ENCODE measurements at regions of chr21 and their contacts with region 1.

Region 1: GRCh38 chr21:45478115-45478801 is 64.0 kb downstream of the SLC19A1 start:
- DNase-seq: peak; percentile 85
- ATAC-seq: peak; percentile 83
- H3K4me3 ChIP-seq: peak overlapping the region; percentile 11 to 53 (median 45)
- H3K4me3 Mint-ChIP-seq: peak overlapping the region; percentile 78
- H3K27ac ChIP-seq: peak overlapping the region; percentile 54 to 76
- H3K27ac Mint-ChIP-seq: peak overlapping the region; percentile 78
- H3K4me1 ChIP-seq: peaks cover 28 to 43% of the 10 kb centered on the region in 2 donors
- H3K4me1 Mint-ChIP-seq: peaks cover 29% of the 10 kb centered on the region
- H3K27me3 ChIP-seq: no peaks in the 10 kb centered on the region
- H3K27me3 Mint-ChIP-seq: no peaks in the 10 kb centered on the region
- CTCF ChIP-seq: peak; percentile 91

Region 2: GRCh38 chr21:45130324-45130774 is 347.9 kb before region 1 on chr21:
- CTCF ChIA-PET with region 1: no interaction called
- POLR2A ChIA-PET with region 1: no interaction called
- intact Hi-C with region 1: no loop called
- DNase-seq: no peak
- ATAC-seq: no peak
- H3K4me3 ChIP-seq: no peak overlapping the region
- H3K4me3 Mint-ChIP-seq: no peak overlapping the region
- H3K27ac ChIP-seq: no peak overlapping the region
- H3K27ac Mint-ChIP-seq: no peak overlapping the region
- H3K4me1 ChIP-seq: peaks cover 55 to 57% of the 10 kb centered on the region in 2 donors
- H3K4me1 Mint-ChIP-seq: peaks cover 62% of the 10 kb centered on the region
- H3K27me3 ChIP-seq: no peaks in the 10 kb centered on the region
- H3K27me3 Mint-ChIP-seq: no peaks in the 10 kb centered on the region
- CTCF ChIP-seq: no peak

Region 3: GRCh38 chr21:45578176-45578801 is 100.0 kb after region 1 on chr21:
- CTCF ChIA-PET with region 1: no interaction called
- POLR2A ChIA-PET with region 1: no interaction called
- intact Hi-C with region 1: no loop called
- DNase-seq: no peak
- ATAC-seq: no peak
- H3K4me3 ChIP-seq: no peak overlapping the region
- H3K4me3 Mint-ChIP-seq: no peak overlapping the region
- H3K27ac ChIP-seq: no peak overlapping the region
- H3K27ac Mint-ChIP-seq: no peak overlapping the region
- H3K4me1 ChIP-seq: no peaks in the 10 kb centered on the region
- H3K4me1 Mint-ChIP-seq: no peaks in the 10 kb centered on the region
- H3K27me3 ChIP-seq: peaks cover 0 to 3% (median 0%) of the 10 kb centered on the region in 4 experiments
- H3K27me3 Mint-ChIP-seq: peaks cover 5% of the 10 kb centered on the region
- CTCF ChIP-seq: no peak

Region 4: GRCh38 chr21:45596704-45597318 is 118.6 kb after region 1 on chr21:
- CTCF ChIA-PET with region 1: interaction called, 31 read pairs
- POLR2A ChIA-PET with region 1: no interaction called
- intact Hi-C with region 1: no loop called
- DNase-seq: peak; percentile 84
- ATAC-seq: peak; percentile 85
- H3K4me3 ChIP-seq: no peak overlapping the region
- H3K4me3 Mint-ChIP-seq: no peak overlapping the region
- H3K27ac ChIP-seq: no peak overlapping the region
- H3K27ac Mint-ChIP-seq: no peak overlapping the region
- H3K4me1 ChIP-seq: peaks cover 15 to 18% of the 10 kb centered on the region in 2 donors
- H3K4me1 Mint-ChIP-seq: peaks cover 17% of the 10 kb centered on the region
- H3K27me3 ChIP-seq: peaks cover 0 to 3% (median 0%) of the 10 kb centered on the region in 4 experiments
- H3K27me3 Mint-ChIP-seq: peaks cover 35% of the 10 kb centered on the region
- CTCF ChIP-seq: peak; percentile 92

Measured in B cell (primary cell).